ENCODE measurements at regions of chr9 and their contacts with region 1.

Region 1: GRCh38 chr9:132575005-132575609 is 7.3 kb upstream of the BARHL1 start:
- DNase-seq: peak; percentile 72 to 87 (median 83)
- H3K4me3 ChIP-seq: no peak overlapping the region
- H3K27ac ChIP-seq: no peak overlapping the region
- H3K4me1 ChIP-seq: no peaks in the 10 kb centered on the region
- H3K27me3 ChIP-seq: peaks cover 37% of the 10 kb centered on the region
- CTCF ChIP-seq: peak; percentile 67 to 90 (median 86)
- POLR2A ChIP-seq: no peak

Region 2: GRCh38 chr9:132411091-132411508 is 164.0 kb before region 1 on chr9:
- intact Hi-C with region 1: loop called (anchors 5 to 10 kb)
- DNase-seq: peak in 1 of 7 donors; percentile 16
- H3K4me3 ChIP-seq: no peak overlapping the region
- H3K27ac ChIP-seq: no peak overlapping the region
- H3K4me1 ChIP-seq: peaks cover 3 to 25% of the 10 kb centered on the region in 2 donors
- H3K27me3 ChIP-seq: peaks cover 47% of the 10 kb centered on the region
- CTCF ChIP-seq: peak; percentile 15 to 50 (median 40)
- POLR2A ChIP-seq: no peak

Region 3: DNA sequence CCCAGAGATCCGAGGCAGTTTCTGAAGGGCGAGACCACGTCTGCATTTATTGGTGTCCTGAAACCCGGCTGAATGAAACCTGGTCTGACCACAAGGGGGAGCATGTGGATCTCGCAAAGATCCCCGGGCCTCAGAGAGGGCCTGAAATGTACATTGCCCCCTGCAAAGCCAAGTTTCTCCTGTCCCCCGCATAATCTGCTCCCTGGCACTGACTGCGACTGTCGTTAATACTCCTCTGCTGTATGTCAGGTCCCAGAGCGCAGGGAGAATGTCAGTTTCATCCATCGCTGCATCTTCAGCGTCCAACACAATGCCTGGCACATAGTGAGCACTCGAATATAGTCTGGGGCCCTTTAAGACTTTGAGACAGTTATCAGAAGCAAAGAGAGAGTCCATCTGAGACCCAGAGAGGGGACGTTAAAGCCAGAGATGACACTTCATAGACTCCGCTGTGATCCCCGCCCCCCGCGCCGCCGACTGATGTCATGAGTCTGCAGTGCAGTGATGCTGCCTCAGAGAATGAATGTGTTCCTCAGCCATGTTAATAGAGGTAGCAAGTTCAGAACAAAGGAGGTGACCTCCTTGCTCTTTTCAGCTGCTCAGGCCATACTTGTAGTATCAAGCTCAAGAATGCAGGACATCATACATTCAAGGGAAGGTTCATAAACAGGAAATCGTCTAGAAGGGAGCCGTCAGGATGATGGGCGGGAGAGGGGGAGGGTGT is 67.2 kb before region 1 on chr9:
- intact Hi-C with region 1: loop called (anchors 2 to 5 kb)
- DNase-seq: peak; percentile 57 to 88 (median 76)
- H3K4me3 ChIP-seq: no peak overlapping the region
- H3K27ac ChIP-seq: no peak overlapping the region
- H3K4me1 ChIP-seq: no peaks in the 10 kb centered on the region
- H3K27me3 ChIP-seq: peaks cover 14% of the 10 kb centered on the region
- CTCF ChIP-seq: peak; percentile 72 to 85 (median 80)
- POLR2A ChIP-seq: no peak

Measured in adrenal gland (tissue), 19 donors.